ENCODE measurements at regions of chr20 and their contacts with region 1.

Region 1: GRCh38 chr20:57748601-57749130 is 38.9 kb upstream of the PMEPA1 start:
- DNase-seq: peak; percentile 85 to 94
- H3K4me3 ChIP-seq: peak overlapping the region; percentile 39 to 50
- H3K27ac ChIP-seq: peak overlapping the region; percentile 94 to 99
- H3K4me1 ChIP-seq: peaks cover 6 to 25% of the 10 kb centered on the region in 2 donors
- H3K27me3 ChIP-seq: no peaks in the 10 kb centered on the region
- CTCF ChIP-seq: no peak

Region 2: DNA sequence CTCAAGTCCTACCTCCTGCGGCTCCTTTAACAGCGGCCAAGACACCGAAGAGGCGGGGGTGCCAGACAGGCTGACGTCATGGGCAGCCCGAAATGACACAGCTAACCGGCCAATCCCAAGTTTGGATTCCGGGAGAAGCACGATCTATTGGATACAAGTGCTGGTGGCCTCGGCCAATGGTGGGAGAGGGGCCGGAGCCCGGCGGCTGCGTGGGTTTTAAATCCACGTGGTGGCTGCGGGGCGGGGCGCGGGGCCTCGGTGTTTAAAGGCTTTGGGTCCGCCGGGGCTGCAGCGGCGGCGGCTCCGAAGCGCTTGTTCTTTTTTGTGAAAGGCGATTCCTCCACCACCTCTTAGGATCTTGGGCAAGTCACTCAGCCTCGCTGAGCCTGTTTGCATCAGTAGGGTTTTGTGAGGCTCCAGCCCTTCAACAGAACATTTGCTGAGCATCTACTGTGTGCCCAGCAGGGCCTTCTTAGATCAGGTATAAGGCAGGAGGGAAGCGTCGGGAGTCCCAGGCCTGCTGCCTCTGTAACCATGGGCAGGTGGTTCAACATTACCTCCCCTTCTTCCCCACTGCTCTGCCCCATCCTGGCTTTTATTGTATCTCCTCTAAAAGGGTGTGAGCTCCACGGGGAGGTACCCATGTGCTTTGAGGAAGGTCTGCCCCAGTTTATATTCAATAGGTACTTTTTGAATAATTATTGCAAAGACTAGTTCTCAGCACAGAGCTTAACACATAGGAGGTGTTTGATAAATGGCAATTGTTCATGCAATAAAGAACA is 30.0 kb before region 1 on chr20:
- intact Hi-C with region 1: loop called (anchors 1 kb)
- DNase-seq: peak; percentile 95 to 99
- H3K4me3 ChIP-seq: peak overlapping the region; percentile 38 to 44
- H3K27ac ChIP-seq: peak overlapping the region; percentile 52 to 53
- H3K4me1 ChIP-seq: peaks cover 29 to 53% of the 10 kb centered on the region in 2 donors
- H3K27me3 ChIP-seq: no peaks in the 10 kb centered on the region
- CTCF ChIP-seq: no peak

Region 3: DNA sequence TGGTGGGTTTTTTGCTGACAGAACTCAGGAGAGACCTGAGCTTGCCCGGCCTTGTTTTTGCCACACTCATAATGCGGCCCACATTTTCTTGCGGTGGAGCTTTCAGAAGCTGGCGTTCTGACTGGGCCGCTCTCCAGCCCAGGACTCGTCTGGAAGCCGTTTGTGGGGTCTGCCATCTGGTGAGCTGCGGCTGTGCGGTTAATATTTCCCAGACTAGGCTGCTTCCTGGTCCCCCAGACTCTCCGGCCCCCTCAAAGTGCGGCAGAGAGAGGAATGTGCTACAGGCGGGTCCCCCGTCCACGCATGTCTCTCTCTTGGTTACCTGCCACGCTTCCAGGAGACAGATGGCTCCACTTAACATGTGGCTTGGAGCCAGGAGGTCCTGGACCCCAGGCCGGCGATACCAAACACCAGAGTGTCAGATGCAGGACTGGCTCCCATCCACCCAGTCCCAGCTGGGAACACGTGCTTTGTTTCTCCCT is 90.0 kb after region 1 on chr20:
- intact Hi-C with region 1: no loop called
- DNase-seq: no peak
- H3K4me3 ChIP-seq: no peak overlapping the region
- H3K27ac ChIP-seq: no peak overlapping the region
- H3K4me1 ChIP-seq: no peaks in the 10 kb centered on the region
- H3K27me3 ChIP-seq: no peaks in the 10 kb centered on the region
- CTCF ChIP-seq: no peak

Region 4: GRCh38 chr20:58557733-58558338 is 809.2 kb after region 1 on chr20:
- intact Hi-C with region 1: no loop called
- DNase-seq: no peak
- H3K4me3 ChIP-seq: no peak overlapping the region
- H3K27ac ChIP-seq: no peak overlapping the region
- H3K4me1 ChIP-seq: no peaks in the 10 kb centered on the region
- H3K27me3 ChIP-seq: no peaks in the 10 kb centered on the region
- CTCF ChIP-seq: no peak